Left colon (tissue), 2 donors: ENCODE measurements at regions of chr2 and their contacts with region 1.

Region 1: GRCh38 chr2:71545572-71546274 is 92.4 kb downstream of the DYSF start:
- DNase-seq: peak; percentile 39 to 52
- ATAC-seq: peak; percentile 75

Region 2: GRCh38 chr2:71801969-71802368 is 256.2 kb after region 1 on chr2:
- intact Hi-C with region 1: loop called in 1 of 2 experiments (anchors 10 kb)
- DNase-seq: peak; percentile 22 to 39
- ATAC-seq: no peak

Region 3: GRCh38 chr2:72236445-72237067 is 690.8 kb after region 1 on chr2:
- intact Hi-C with region 1: no loop called
- DNase-seq: no peak
- ATAC-seq: no peak

Region 4: GRCh38 chr2:72745679-72746368 is 1200.1 kb after region 1 on chr2:
- intact Hi-C with region 1: loop called in 1 of 2 experiments (anchors 10 kb)
- DNase-seq: no peak
- ATAC-seq: peak; percentile 50